Posterior cingulate gyrus (tissue), 11 donors: ENCODE measurements at regions of chr16 and their contacts with region 1.

Region 1: GRCh38 chr16:55585631-55586030 is 19.1 kb downstream of the CAPNS2 start:
- DNase-seq: no peak

Region 2: DNA sequence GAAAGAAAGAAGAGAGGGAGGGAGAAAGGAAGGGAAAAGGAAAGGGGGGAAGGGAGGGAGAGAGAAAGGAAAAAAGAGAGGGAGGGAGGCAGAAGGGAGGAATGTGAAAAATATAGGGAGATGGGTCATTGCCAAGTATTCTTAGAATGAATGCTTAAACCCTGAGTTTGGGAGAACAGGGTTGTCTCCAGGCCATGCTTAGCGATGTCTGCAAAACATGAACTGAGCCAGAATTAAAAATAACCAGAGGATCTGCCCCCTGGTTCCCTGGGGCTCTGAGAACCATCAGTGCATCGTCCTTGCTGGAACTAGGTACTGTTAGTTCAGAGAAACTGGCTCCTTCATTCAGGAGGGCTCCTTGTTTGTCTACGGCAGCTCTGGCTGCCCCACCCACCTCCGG is 484.6 kb before region 1 on chr16:
- intact Hi-C with region 1: no loop called
- DNase-seq: no peak

Region 3: DNA sequence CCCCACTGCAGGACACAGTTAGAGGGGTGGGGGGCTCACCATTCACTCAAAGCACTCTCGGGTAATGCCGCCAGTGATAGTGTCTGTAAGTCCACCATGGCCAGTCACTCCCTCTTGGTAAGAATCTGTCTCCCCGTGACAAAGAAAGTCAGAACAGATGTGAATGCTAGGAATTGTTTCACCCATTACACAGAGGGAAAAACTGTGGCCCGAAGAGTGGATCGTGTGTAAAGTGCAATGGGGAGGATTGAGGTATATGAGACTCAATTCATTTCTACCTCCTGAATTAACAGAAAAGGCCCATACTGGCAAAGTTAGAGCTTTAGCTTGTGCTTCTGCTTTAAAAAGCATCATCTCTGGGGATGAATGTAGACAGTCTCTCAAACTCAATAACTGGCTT is 52.6 kb after region 1 on chr16:
- intact Hi-C with region 1: loop called (anchors 10 kb)
- DNase-seq: no peak

Region 4: DNA sequence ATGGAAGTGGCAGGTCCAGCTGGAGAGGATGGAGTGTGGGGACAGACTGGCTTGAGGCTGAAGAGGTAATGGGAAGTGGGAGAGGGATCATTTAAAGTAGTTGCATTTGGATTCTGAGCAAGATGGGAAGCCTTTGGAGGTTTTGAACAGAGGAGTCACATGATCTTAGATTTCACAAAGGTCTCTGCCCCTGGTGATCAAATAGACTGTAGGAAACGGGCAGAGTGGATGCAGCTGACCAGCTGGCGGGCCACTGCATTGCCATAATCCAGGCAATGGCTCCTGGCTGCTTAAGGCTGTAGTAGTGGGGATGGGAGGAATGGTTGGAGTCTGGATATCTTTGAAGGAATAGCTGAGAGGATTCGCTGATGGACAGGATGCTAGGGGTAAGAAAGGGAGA is 151.7 kb after region 1 on chr16:
- intact Hi-C with region 1: no loop called
- DNase-seq: no peak

Region 5: GRCh38 chr16:56691885-56692284 is 1106.3 kb after region 1 on chr16:
- intact Hi-C with region 1: no loop called
- DNase-seq: no peak